ENCODE measurements at regions of chr2 and their contacts with region 1.

Region 1: DNA sequence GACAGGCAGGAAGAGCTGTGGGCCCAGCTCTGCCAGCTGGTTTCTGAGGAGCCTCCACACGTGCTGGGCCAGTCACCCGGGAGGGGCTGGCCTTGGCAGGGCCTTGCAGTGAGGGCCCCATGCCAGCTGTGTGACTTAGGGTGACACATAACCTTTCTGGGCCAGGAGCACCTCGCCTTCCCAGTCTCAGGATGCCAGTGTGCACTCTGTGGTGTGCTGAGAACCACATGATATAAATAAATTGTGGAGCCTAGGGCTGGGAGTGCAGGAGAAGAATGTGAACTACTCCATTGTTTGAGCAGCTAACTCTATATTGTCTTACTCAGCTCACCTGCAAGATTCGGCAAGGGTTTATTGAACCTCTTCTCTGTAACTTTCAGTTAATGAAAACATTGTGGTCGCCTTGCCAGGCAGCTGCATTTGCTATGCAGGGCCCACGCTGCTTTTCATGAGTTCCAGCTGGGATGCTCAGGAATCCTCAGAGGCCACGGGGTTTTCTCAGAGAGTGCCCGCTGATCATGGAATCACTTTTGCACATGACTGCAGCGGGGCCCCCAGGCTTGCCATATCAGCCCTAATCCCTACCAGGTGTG is 222.3 kb downstream of the SH3RF3 start:
- DNase-seq: peak; percentile 54 to 91
- H3K4me3 ChIP-seq: no peak overlapping the region
- H3K27ac ChIP-seq: peak overlapping the region; percentile 49 to 51
- H3K4me1 ChIP-seq: peaks cover 0 to 45% (median 28%) of the 10 kb centered on the region in 4 donors
- H3K27me3 ChIP-seq: no peaks in the 10 kb centered on the region
- CTCF ChIP-seq: no peak

Region 2: DNA sequence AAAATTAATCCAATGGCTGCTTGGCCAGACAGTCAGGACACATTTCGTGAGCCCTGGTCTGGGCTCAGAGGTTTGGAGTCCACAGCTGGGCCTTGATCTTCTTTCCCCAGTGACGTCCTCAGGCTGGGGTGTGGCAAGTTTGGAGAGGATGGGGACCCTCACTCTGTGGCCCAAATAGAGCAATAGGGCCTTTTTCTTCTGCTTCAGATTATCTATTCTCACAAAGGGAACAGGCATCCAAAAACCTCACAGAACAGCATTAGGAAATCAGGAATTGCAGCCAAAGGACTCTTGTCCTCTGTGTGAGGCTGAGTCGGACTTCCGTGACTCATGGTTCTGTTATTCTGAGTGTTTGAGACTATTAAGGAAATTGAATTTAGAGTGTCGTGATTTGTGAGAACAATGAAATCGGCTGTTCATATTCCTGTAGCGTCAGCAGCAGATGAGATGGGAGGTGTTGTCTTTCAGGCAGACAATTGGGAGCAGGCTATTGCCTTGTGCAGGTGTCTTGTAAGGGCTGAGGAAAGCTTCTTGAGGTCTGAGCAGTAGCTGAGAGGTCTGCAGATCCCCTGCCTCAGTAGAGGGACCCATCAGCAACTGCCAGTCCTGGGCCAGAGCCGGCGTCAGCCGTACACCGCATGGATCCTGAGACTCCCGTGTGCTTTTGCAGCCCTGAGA is 108.5 kb before region 1 on chr2:
- intact Hi-C with region 1: no loop called
- DNase-seq: peak in 1 of 2 donors; percentile 79
- H3K4me3 ChIP-seq: peak overlapping the region in 1 of 2 donors; percentile 18
- H3K27ac ChIP-seq: peak overlapping the region; percentile 72 to 84
- H3K4me1 ChIP-seq: peaks cover 23 to 94% (median 66%) of the 10 kb centered on the region in 4 donors
- H3K27me3 ChIP-seq: no peaks in the 10 kb centered on the region
- CTCF ChIP-seq: no peak

Region 3: GRCh38 chr2:109322111-109322510 is 29.1 kb before region 1 on chr2:
- intact Hi-C with region 1: loop called (anchors 1 kb)
- DNase-seq: peak; percentile 98 to 99
- H3K4me3 ChIP-seq: peak overlapping the region in 1 of 2 donors; percentile 41
- H3K27ac ChIP-seq: peak overlapping the region; percentile 79 to 92
- H3K4me1 ChIP-seq: peaks cover 3 to 97% (median 84%) of the 10 kb centered on the region in 4 donors
- H3K27me3 ChIP-seq: no peaks in the 10 kb centered on the region
- CTCF ChIP-seq: no peak

Region 4: GRCh38 chr2:109497463-109497862 is 146.2 kb after region 1 on chr2:
- intact Hi-C with region 1: loop called (anchors 10 kb)
- DNase-seq: no peak
- H3K4me3 ChIP-seq: no peak overlapping the region
- H3K27ac ChIP-seq: no peak overlapping the region
- H3K4me1 ChIP-seq: peaks cover 0 to 27% (median 2%) of the 10 kb centered on the region in 4 donors
- H3K27me3 ChIP-seq: no peaks in the 10 kb centered on the region
- CTCF ChIP-seq: no peak

Measured in tibial artery (tissue), 4 donors.